ENCODE measurements at regions of chr16 and their contacts with region 1.

Region 1: GRCh38 chr16:48623304-48624016 is 13.5 kb upstream of the N4BP1 start:
- DNase-seq: peak; percentile 83
- ATAC-seq: peak; percentile 98
- H3K4me3 ChIP-seq: peak overlapping the region; percentile 39 to 62 (median 59)
- H3K4me3 Mint-ChIP-seq: peak overlapping the region; percentile 85
- H3K27ac ChIP-seq: no peak overlapping the region
- H3K27ac Mint-ChIP-seq: no peak overlapping the region
- H3K4me1 ChIP-seq: peaks cover 14 to 28% of the 10 kb centered on the region in 2 donors
- H3K4me1 Mint-ChIP-seq: peaks cover 22% of the 10 kb centered on the region
- H3K27me3 ChIP-seq: peaks cover 0 to 3% (median 0%) of the 10 kb centered on the region in 4 experiments
- H3K27me3 Mint-ChIP-seq: peaks cover 4% of the 10 kb centered on the region
- CTCF ChIP-seq: peak; percentile 100

Region 2: DNA sequence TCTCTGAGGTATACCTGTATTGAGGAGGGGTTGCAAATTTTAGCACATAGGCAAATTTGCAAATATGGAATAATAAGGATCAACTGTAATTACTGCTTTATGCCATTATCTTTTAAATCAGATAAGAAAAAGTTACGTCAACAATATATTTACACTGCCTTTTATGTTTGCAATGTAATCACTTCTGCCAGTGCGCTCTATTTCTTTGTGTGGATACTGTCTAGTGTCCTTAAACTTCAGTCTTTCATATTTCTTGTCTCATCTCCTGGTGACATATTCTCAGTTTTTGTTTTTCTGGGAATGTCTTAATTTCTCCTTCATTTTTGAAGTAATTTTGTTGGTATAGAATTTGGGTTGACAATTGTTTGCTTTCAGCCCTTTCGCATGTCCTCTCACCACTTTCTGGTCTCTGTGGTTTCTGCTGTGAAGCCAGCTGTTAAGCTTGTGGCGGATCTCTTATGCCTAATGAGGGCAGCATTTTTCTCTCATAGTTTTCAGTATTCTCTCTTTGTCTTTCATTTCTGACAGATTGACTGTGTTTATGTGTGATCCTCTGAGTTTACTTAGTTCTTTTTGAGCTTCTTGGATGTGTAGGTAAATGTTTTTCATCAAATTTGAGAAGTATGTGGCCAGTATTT is 338.6 kb before region 1 on chr16:
- CTCF ChIA-PET with region 1: no interaction called
- POLR2A ChIA-PET with region 1: interaction called, 10 read pairs
- intact Hi-C with region 1: no loop called
- DNase-seq: no peak
- ATAC-seq: no peak
- H3K4me3 ChIP-seq: no peak overlapping the region
- H3K4me3 Mint-ChIP-seq: no peak overlapping the region
- H3K27ac ChIP-seq: no peak overlapping the region
- H3K27ac Mint-ChIP-seq: no peak overlapping the region
- H3K4me1 ChIP-seq: no peaks in the 10 kb centered on the region
- H3K4me1 Mint-ChIP-seq: no peaks in the 10 kb centered on the region
- H3K27me3 ChIP-seq: no peaks in the 10 kb centered on the region
- H3K27me3 Mint-ChIP-seq: no peaks in the 10 kb centered on the region
- CTCF ChIP-seq: no peak

Region 3: GRCh38 chr16:48535831-48536613 is 87.4 kb before region 1 on chr16:
- CTCF ChIA-PET with region 1: interaction called, 10 read pairs
- POLR2A ChIA-PET with region 1: no interaction called
- intact Hi-C with region 1: loop called (anchors 1 kb)
- DNase-seq: peak; percentile 67
- ATAC-seq: peak; percentile 72
- H3K4me3 ChIP-seq: no peak overlapping the region
- H3K4me3 Mint-ChIP-seq: peak overlapping the region; percentile 44
- H3K27ac ChIP-seq: no peak overlapping the region
- H3K27ac Mint-ChIP-seq: peak overlapping the region; percentile 37
- H3K4me1 ChIP-seq: peaks cover 16 to 19% of the 10 kb centered on the region in 2 donors
- H3K4me1 Mint-ChIP-seq: peaks cover 20% of the 10 kb centered on the region
- H3K27me3 ChIP-seq: no peaks in the 10 kb centered on the region
- H3K27me3 Mint-ChIP-seq: no peaks in the 10 kb centered on the region
- CTCF ChIP-seq: no peak

Measured in B cell (primary cell).